Lower lobe of right lung (tissue), 2 donors: ENCODE measurements at regions of chrX and their contacts with region 1.

Region 1: DNA sequence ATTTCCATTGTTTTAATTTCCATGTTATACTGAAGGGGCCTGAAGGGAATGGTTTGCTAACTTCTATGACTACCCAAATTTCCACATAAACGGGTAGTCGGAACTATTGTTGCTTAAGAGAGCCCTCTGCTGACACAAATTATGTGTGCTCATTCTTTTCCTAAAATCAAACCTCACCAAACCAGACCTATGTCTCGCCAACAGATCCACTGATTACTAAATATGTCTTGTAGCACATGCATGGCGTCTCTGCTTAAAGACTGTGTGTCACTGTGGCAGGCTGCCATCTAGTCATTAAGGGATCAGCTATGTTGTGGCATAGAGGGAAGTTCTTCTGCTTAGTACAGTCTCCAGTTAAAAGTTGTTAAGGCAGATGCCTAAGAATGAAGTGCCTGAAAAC is 25.1 kb downstream of the PIR start:
- DNase-seq: no peak
- ATAC-seq: peak; percentile 64 to 66
- H3K4me3 ChIP-seq: no peak overlapping the region
- H3K27ac ChIP-seq: no peak overlapping the region
- H3K4me1 ChIP-seq: no peaks in the 10 kb centered on the region
- H3K27me3 ChIP-seq: no peaks in the 10 kb centered on the region
- CTCF ChIP-seq: peak; percentile 33

Region 2: DNA sequence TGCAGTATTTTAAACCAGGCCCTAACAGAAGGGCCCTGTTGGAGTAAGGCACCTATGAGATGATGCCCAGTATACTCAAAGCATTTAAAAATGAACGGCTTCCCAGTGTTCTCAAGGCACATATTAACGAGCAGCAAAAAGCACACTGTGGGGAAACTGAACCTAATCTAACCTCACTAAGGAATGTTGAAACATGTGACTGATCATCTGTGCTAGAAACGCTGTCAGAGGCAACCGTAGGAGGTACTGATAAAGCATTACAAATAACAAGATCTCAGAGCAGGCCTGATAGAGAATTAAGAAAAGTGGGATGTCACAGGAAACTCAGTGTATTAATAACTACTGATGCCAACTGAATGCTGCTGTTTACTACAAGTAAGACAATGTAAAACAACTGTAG is 222.1 kb before region 1 on chrX:
- intact Hi-C with region 1: no loop called
- DNase-seq: no peak
- ATAC-seq: no peak
- H3K4me3 ChIP-seq: no peak overlapping the region
- H3K27ac ChIP-seq: no peak overlapping the region
- H3K4me1 ChIP-seq: no peaks in the 10 kb centered on the region
- H3K27me3 ChIP-seq: no peaks in the 10 kb centered on the region
- CTCF ChIP-seq: no peak

Region 3: GRCh38 chrX:15349046-15349445 is 119.0 kb before region 1 on chrX:
- intact Hi-C with region 1: loop called (anchors 10 kb)
- DNase-seq: no peak
- ATAC-seq: peak; percentile 81 to 88
- H3K4me3 ChIP-seq: no peak overlapping the region
- H3K27ac ChIP-seq: no peak overlapping the region
- H3K4me1 ChIP-seq: no peaks in the 10 kb centered on the region
- H3K27me3 ChIP-seq: no peaks in the 10 kb centered on the region
- CTCF ChIP-seq: peak; percentile 45

Region 4: DNA sequence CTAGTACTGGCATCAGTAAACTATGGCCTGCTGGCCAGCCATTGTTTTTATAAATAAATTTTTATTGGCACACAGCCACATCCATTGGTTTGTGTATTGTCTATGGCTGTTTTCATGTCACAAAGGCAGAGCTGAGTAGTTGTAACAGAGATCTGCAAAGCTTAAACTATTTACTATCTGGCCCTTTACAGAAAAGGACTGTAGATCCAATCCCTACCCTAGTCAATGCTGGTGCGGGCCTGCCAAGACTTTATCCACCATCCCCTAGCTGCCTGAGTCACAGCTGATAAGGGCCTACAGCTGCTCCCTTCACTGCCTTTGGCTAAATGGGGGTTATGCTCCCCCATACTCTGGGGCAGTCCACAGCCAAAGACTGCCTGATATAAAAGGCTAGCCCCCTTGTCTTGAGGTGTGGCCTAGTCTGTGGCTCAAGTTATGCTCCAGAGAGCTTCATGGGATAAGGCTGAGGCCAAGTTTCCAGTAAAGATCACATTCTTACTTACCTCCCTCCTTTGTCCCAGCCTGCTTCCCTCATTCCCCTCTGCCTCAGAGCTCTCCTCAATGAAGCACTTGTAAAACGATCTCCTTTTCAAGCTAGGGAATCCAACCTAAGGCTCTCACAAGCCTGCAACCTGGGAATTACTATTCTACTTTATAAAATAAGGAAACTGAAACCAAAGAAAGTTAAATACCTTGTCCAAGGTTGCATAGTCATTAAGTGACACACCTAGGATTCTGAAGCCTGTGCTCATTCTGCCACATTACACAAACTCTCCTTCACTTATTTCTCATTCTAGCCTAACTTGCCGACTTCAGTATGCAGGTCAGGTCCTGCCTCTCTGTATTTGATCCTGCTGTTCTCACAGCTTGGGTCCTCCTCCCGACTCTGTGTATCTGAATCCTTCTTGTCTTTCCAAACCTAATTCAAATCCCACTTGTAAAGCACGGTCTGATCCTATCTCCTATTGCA is 112.0 kb after region 1 on chrX:
- intact Hi-C with region 1: no loop called
- DNase-seq: no peak
- ATAC-seq: peak in 1 of 2 donors; percentile 62
- H3K4me3 ChIP-seq: no peak overlapping the region
- H3K27ac ChIP-seq: peak overlapping the region; percentile 24
- H3K4me1 ChIP-seq: peaks cover 6% of the 10 kb centered on the region
- H3K27me3 ChIP-seq: no peaks in the 10 kb centered on the region
- CTCF ChIP-seq: no peak